Activated T-helper 2 cell treated with anti-CD3 and anti-CD28 coated beads, Interferon-gamma antibody, Interleukin-2, Interleukin-4, amounts not matched to agents 10 μg/mL and 5 μg/mL and 100 μg/mL, durations not matched to agents 14 hours and 24 hours and 36 hours (primary cell): ENCODE measurements at regions of chr4 and their contacts with region 1.

Region 1: GRCh38 chr4:72468904-72469502 is 100.0 kb downstream of the ADAMTS3 start:
- DNase-seq: no peak
- H3K4me3 Mint-ChIP-seq: no peak overlapping the region
- H3K27ac Mint-ChIP-seq: no peak overlapping the region
- H3K4me1 Mint-ChIP-seq: no peaks in the 10 kb centered on the region
- H3K27me3 Mint-ChIP-seq: no peaks in the 10 kb centered on the region

Region 2: DNA sequence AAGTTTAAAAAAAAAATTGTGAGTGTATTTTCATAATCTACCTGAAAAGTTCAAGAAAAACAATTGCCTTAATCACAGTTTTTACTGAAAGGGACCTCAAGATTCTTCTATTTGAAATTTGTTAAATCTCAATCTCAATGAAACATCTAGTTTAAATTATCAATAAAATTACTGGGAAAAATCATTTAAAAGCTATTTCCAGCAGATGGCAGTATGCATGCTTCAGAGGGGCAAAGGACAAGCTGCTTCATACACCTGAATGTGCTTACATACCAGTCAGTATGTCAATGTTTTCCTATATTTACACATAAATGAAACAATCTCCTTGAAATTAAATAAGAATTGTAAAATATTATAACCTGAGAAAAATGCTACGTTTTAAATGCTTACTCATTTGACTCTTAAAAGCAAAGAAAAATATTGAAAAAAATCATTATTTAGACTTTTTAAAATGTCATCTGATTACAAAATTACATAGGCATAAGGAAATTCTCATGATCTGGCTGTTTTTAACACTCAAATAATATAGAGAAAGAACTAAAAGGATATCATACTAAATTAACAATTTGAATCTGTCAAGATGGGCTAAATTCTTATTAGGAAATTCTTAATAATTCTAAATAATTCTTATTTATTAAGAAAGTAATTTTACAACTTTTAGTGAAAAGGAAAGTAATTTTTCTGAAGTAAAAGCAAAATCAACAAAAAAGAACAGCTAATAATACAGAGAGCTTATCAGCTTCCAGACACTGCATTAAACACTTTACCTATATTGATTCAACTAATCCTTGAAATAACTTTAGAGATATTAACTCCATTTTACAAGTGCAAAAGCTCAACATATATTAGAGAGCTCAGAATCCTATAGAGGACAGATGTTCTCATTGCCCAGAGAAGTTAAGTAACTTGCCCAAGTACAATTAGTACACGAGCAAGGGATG is 142.0 kb before region 1 on chr4:
- intact Hi-C with region 1: loop called (anchors 5 kb)
- DNase-seq: no peak
- H3K4me3 Mint-ChIP-seq: no peak overlapping the region
- H3K27ac Mint-ChIP-seq: no peak overlapping the region
- H3K4me1 Mint-ChIP-seq: no peaks in the 10 kb centered on the region
- H3K27me3 Mint-ChIP-seq: peaks cover 2% of the 10 kb centered on the region

Region 3: DNA sequence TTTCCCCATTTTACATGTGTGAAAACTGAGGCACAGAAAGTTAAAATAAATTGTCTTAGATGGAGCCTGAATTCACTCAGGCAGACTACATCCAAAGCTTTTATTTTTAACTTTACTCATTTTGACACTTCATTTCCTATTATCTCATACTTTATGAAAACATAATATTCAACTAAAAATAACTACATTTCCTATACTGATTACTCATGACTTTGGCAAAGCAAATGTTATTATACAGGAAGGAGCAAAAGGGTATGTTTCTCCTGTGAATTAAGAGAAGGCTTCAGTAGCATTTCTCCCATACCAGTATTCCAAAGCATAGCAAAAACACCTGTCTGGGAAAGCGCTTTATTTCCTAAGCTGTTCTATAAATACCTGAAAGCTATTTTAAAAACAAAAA is 78.6 kb before region 1 on chr4:
- intact Hi-C with region 1: no loop called
- DNase-seq: no peak
- H3K4me3 Mint-ChIP-seq: no peak overlapping the region
- H3K27ac Mint-ChIP-seq: no peak overlapping the region
- H3K4me1 Mint-ChIP-seq: no peaks in the 10 kb centered on the region
- H3K27me3 Mint-ChIP-seq: no peaks in the 10 kb centered on the region

Region 4: DNA sequence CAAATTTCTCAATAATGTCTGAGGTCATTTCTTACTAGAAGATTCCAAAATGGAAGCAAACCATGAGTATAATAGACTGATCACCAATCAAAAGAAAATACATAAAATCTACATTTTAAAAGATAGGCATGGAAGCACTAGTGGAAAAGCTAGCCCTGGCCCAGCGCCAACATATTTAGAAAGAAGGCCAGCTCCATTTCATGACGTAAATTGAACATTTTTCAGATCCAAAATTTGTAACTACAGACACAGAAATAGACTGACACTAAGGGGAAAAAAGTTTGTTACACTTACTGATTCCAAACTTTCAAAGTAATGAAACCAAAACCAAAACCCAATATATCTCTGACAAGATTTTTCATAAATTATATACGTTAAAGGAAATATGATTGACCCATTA is 17.7 kb before region 1 on chr4:
- intact Hi-C with region 1: no loop called
- DNase-seq: no peak
- H3K4me3 Mint-ChIP-seq: no peak overlapping the region
- H3K27ac Mint-ChIP-seq: no peak overlapping the region
- H3K4me1 Mint-ChIP-seq: no peaks in the 10 kb centered on the region
- H3K27me3 Mint-ChIP-seq: no peaks in the 10 kb centered on the region

Region 5: DNA sequence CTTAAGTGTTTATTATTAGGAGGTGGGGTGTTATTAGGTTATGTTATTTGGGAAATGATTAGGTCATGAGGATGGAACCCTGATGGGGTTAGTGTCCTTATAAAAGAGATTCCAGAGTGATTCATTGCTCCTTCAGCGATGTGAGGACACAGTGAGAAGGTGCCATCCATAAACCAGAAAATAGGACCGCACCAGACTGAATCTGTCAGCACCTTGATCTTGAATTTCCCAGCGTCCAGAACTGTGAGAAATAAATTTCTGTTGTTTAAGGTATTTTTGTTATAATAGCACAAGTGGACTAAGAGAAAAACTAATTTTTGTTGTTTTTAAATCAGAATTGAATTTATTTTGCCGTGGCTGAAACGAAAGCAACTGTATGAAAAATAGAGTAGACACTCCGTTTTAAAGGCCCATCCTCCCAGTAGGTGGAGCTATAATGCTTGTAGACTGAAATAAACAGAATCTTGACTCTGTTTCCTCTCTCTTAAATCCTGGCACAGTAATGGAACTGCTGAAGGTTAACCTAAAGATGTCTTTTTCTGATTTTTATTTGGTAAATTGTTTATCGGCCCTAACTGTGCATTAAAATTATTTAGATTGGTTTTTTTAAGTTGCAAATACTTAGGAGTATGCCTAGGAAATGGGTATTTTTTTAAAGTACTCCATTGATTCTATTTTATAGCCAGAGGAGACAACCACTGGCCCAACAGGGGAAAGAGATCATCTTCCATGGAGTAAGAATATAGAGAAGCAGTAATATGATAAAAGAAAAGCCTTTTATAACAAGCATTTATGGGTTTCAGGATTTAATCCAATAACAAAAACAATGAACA is 233.2 kb after region 1 on chr4:
- intact Hi-C with region 1: no loop called
- DNase-seq: no peak
- H3K4me3 Mint-ChIP-seq: peak overlapping the region; percentile 64
- H3K27ac Mint-ChIP-seq: no peak overlapping the region
- H3K4me1 Mint-ChIP-seq: no peaks in the 10 kb centered on the region
- H3K27me3 Mint-ChIP-seq: peaks cover 4% of the 10 kb centered on the region